Naive thymus-derived CD4-positive, alpha-beta T cell (primary cell): ENCODE measurements at regions of chr22 and their contacts with region 1.

Region 1: DNA sequence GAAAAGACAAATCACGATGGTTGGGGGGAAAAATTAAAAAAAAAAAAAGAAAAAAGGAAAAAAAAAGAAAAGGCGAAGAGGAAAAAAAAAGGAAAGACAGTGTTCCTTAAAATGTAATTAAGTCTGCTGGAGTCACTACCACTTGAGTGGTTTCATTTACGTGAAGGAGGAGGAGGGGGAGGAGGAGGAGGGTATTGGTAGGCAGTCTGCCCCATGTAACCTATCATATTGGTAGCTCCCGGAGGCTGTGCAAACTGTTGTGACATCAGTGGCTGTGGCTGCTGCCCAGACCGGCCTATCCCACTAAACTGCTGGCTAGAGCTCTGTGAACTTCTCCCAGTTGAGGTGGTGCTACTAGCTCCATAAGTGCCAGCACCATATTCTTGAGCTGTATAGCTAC is 17.9 kb downstream of the KDELR3 start:
- DNase-seq: no peak
- ATAC-seq: peak; percentile 46
- H3K4me3 ChIP-seq: no peak overlapping the region
- H3K4me3 Mint-ChIP-seq: peak overlapping the region in 1 of 10 donors; percentile 12
- H3K27ac ChIP-seq: no peak overlapping the region
- H3K27ac Mint-ChIP-seq: peak overlapping the region in 7 of 9 donors; percentile 38 to 80 (median 59)
- H3K4me1 ChIP-seq: no peaks in the 10 kb centered on the region
- H3K4me1 Mint-ChIP-seq: peaks cover 18 to 72% (median 54%) of the 10 kb centered on the region in 7 donors
- H3K27me3 ChIP-seq: no peaks in the 10 kb centered on the region
- H3K27me3 Mint-ChIP-seq: no peaks in the 10 kb centered on the region

Region 2: GRCh38 chr22:38467904-38468758 is 17.7 kb before region 1 on chr22 and contains the start of gene KDELR3:
- CTCF ChIA-PET with region 1: no interaction called
- POLR2A ChIA-PET with region 1: no interaction called
- intact Hi-C with region 1: no loop called
- DNase-seq: peak in 1 of 9 donors; percentile 83
- ATAC-seq: peak; percentile 77
- H3K4me3 ChIP-seq: peak within 1 kb of the TSS; percentile 44
- H3K4me3 Mint-ChIP-seq: peak within 1 kb of the TSS; percentile 51 to 85 (median 68)
- H3K27ac ChIP-seq: no peak within 1 kb of the TSS
- H3K27ac Mint-ChIP-seq: peak within 1 kb of the TSS in 1 of 9 donors; percentile 46
- H3K4me1 ChIP-seq: peaks cover 0 to 3% of the 10 kb centered on the region in 2 donors
- H3K4me1 Mint-ChIP-seq: peaks cover 0 to 15% (median 11%) of the 10 kb centered on the region in 7 donors
- H3K27me3 ChIP-seq: peaks cover 0 to 11% of the 10 kb centered on the region in 2 donors
- H3K27me3 Mint-ChIP-seq: peaks cover 23 to 49% (median 26%) of the 10 kb centered on the region in 5 donors
- total RNA-seq, gene KDELR3: 0.80 TPM in 1 of 5 experiments, not detected in the others

Region 3: GRCh38 chr22:38531251-38531938 is 45.6 kb after region 1 on chr22:
- CTCF ChIA-PET with region 1: no interaction called
- POLR2A ChIA-PET with region 1: interaction called, 3 read pairs
- intact Hi-C with region 1: loop called in 1 of 2 experiments (anchors 10 kb)
- DNase-seq: no peak
- ATAC-seq: peak; percentile 41
- H3K4me3 ChIP-seq: no peak overlapping the region
- H3K4me3 Mint-ChIP-seq: peak overlapping the region; percentile 3 to 80 (median 64)
- H3K27ac ChIP-seq: peak overlapping the region; percentile 50
- H3K27ac Mint-ChIP-seq: peak overlapping the region; percentile 82 to 90 (median 84)
- H3K4me1 ChIP-seq: peaks cover 0 to 14% of the 10 kb centered on the region in 2 donors
- H3K4me1 Mint-ChIP-seq: peaks cover 6 to 26% (median 16%) of the 10 kb centered on the region in 7 donors
- H3K27me3 ChIP-seq: no peaks in the 10 kb centered on the region
- H3K27me3 Mint-ChIP-seq: no peaks in the 10 kb centered on the region